Aorta (tissue), 5 donors: ENCODE measurements at regions of chr16 and their contacts with region 1.

Region 1: DNA sequence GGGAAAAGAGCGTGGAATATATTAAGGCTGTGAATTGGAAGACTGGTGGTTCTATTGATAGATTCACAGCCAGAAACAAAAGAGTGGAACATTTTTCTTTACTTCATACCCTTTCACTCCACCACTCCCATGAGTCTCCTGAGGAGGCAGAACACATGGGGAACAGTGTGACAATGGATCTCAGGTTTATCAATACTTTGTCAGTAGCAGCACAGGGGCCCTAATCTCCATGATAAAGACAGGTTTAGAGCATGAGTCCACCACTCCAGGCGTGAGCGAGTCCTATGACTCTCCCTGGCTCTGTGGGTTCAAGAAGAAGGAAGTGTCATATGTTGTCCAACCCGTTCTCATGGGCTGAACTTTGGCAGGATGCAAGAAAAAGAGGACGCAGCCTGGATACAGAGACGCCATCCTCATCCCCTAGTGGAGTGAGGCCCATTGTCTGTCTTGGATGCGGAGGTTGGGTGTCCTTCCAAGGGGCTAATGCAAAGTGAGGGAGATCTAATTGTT is 361.2 kb downstream of the TMEM114 start:
- DNase-seq: no peak
- ATAC-seq: no peak
- H3K4me3 ChIP-seq: no peak overlapping the region
- H3K27ac ChIP-seq: no peak overlapping the region
- H3K4me1 ChIP-seq: no peaks in the 10 kb centered on the region
- H3K27me3 ChIP-seq: no peaks in the 10 kb centered on the region

Region 2: DNA sequence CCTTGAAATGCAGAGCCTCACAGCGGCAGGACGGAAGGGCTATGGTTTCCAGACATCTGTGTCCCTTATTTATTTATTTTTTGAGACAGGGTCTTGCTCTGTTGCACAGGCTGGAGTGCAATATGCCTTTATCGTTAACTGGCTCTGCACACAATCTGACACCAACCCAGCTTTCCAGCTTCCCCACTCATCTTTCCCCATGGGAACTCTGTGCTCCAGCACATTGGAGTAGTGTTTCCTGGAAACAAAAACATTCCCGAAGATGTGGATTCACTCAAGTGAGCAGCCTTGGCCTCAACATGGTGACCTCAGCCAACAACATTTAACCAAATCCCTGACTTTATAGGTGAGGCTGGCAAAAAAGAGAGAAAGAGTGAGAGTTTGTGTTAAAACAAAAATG is 54.1 kb after region 1 on chr16:
- intact Hi-C with region 1: loop called in 1 of 2 experiments (anchors 10 kb)
- DNase-seq: no peak
- ATAC-seq: no peak
- H3K4me3 ChIP-seq: no peak overlapping the region
- H3K27ac ChIP-seq: no peak overlapping the region
- H3K4me1 ChIP-seq: no peaks in the 10 kb centered on the region
- H3K27me3 ChIP-seq: no peaks in the 10 kb centered on the region